Psoas muscle (tissue), 8 donors: ENCODE measurements at regions of chr1 and their contacts with region 1.

Region 1: GRCh38 chr1:91617285-91617765 is 116.7 kb downstream of the CDC7 start:
- DNase-seq: peak; percentile 44 to 82
- ATAC-seq: peak; percentile 71 to 92 (median 91)
- H3K4me3 ChIP-seq: no peak overlapping the region
- H3K27ac ChIP-seq: no peak overlapping the region
- H3K4me1 ChIP-seq: peaks cover 19% of the 10 kb centered on the region
- H3K27me3 ChIP-seq: no peaks in the 10 kb centered on the region
- CTCF ChIP-seq: peak; percentile 49

Region 2: GRCh38 chr1:91201176-91201575 is 416.1 kb before region 1 on chr1:
- intact Hi-C with region 1: no loop called
- DNase-seq: no peak
- ATAC-seq: no peak
- H3K4me3 ChIP-seq: no peak overlapping the region
- H3K27ac ChIP-seq: no peak overlapping the region
- H3K4me1 ChIP-seq: no peaks in the 10 kb centered on the region
- H3K27me3 ChIP-seq: no peaks in the 10 kb centered on the region
- CTCF ChIP-seq: no peak

Region 3: GRCh38 chr1:91555821-91556531 is 61.3 kb before region 1 on chr1:
- intact Hi-C with region 1: no loop called
- DNase-seq: no peak
- ATAC-seq: no peak
- H3K4me3 ChIP-seq: no peak overlapping the region
- H3K27ac ChIP-seq: no peak overlapping the region
- H3K4me1 ChIP-seq: peaks cover 9% of the 10 kb centered on the region
- H3K27me3 ChIP-seq: no peaks in the 10 kb centered on the region
- CTCF ChIP-seq: no peak

Region 4: GRCh38 chr1:91929250-91929649 is 311.9 kb after region 1 on chr1:
- intact Hi-C with region 1: loop called in 1 of 2 experiments (anchors 5 kb)
- DNase-seq: no peak
- ATAC-seq: no peak
- H3K4me3 ChIP-seq: no peak overlapping the region
- H3K27ac ChIP-seq: no peak overlapping the region
- H3K4me1 ChIP-seq: no peaks in the 10 kb centered on the region
- H3K27me3 ChIP-seq: no peaks in the 10 kb centered on the region
- CTCF ChIP-seq: no peak